ENCODE measurements at regions of chr17 and their contacts with region 1.

Region 1: DNA sequence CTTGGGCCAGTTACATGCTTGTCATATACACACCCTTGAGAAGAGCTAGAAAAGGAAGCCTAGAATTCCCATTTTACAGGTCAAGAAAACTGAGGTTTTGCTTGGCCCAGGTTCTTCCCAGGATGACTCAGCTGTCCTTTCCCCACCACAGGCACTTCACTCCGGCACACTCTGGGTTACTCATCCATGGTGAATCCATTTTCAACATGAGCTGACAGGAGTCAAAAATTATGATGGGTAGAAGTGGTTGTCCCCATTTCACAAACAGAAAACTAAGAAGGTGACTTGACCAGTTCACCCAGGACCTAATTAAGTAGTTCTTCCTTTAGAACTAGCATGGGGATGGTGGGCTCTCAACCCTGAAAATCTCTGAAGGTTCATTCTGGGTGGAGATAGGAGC is 67.2 kb downstream of the USP22 start:
- DNase-seq: no peak
- H3K4me3 ChIP-seq: no peak overlapping the region
- H3K27ac ChIP-seq: no peak overlapping the region
- H3K4me1 ChIP-seq: no peaks in the 10 kb centered on the region
- H3K27me3 ChIP-seq: peaks cover 33% of the 10 kb centered on the region
- CTCF ChIP-seq: no peak

Region 2: GRCh38 chr17:20944014-20944865 is 31.3 kb before region 1 on chr17:
- CTCF ChIA-PET with region 1: no interaction called
- POLR2A ChIA-PET with region 1: no interaction called
- intact Hi-C with region 1: no loop called
- DNase-seq: peak; percentile 42 to 66
- H3K4me3 ChIP-seq: no peak overlapping the region
- H3K27ac ChIP-seq: no peak overlapping the region
- H3K4me1 ChIP-seq: 0 out of 2 replicates have a peak, but pooled peaks cover 4% of the 10 kb centered on the region
- H3K27me3 ChIP-seq: peaks cover 22% of the 10 kb centered on the region; the same call in 1 of the 2 replicates
- CTCF ChIP-seq: peak; percentile 68

Region 3: DNA sequence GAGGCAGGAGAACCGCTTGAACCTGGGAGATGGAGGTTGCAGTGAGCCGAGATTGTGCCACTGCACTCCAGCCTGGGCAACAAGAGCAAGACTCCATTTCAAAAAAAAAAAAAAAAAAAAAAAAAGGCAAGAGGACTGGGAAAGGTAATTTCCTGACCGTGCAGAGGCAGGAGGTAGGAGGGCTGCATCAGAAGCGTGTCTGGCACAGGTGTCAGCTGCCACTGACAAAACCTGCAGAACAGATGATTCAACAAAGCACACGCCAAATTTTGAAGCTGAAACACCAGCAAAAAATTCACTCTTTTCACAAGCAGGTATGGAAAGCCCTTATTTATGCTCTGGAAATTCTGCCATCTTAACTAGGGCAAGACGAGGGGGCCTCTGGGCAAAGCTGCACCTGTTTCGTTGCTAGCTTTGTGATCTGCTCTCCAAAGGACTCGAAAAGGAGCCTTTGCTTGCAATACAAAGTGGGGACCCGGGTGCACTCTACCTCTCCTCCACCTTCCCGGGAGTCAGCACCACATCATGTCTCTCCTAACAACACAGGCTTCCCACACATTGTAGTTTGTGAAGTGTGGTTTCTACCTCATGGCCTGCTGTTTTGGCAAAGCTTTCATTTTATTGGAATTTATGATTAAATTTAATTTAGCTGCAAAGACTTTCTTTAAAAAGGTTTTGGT is 33.6 kb after region 1 on chr17:
- CTCF ChIA-PET with region 1: no interaction called
- POLR2A ChIA-PET with region 1: interaction called, 10 read pairs
- intact Hi-C with region 1: no loop called
- DNase-seq: no peak
- H3K4me3 ChIP-seq: no peak overlapping the region
- H3K27ac ChIP-seq: no peak overlapping the region
- H3K4me1 ChIP-seq: no peaks in the 10 kb centered on the region
- H3K27me3 ChIP-seq: no peaks in the 10 kb centered on the region
- CTCF ChIP-seq: no peak